ENCODE measurements at regions of chr20 and their contacts with region 1.

Region 1: DNA sequence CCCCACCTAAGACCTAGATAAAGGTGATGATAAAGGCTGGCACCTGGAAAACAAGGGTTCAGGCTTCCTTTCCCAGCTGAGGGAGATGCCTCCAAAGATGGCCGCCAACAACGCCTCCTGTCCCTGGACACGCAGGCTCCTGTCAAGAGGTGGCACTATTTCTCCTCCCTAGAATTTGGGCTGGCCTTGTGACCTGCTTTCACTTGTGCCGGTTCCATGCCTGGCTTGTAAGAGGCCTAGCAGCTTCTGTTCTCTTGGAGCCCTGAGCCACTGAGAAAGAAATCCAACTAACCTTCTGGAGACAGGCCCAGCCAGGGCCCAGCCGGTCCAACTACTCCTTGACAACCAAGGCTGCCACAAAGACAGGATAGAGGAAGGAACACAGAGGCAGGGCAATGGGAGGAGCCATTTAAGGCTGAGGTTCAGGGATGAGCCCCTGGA is 60.2 kb upstream of the RALY start:
- DNase-seq: peak; percentile 46
- H3K4me3 ChIP-seq: no peak overlapping the region
- H3K27ac ChIP-seq: peak overlapping the region; percentile 26
- H3K4me1 ChIP-seq: no peaks in the 10 kb centered on the region
- H3K27me3 ChIP-seq: peaks cover 5% of the 10 kb centered on the region
- CTCF ChIP-seq: peak; percentile 71

Region 2: GRCh38 chr20:34069341-34070078 is 136.0 kb after region 1 on chr20:
- intact Hi-C with region 1: loop called (anchors 5 kb)
- DNase-seq: peak; percentile 56
- H3K4me3 ChIP-seq: no peak overlapping the region
- H3K27ac ChIP-seq: peak overlapping the region; percentile 35
- H3K4me1 ChIP-seq: peaks cover 55% of the 10 kb centered on the region
- H3K27me3 ChIP-seq: no peaks in the 10 kb centered on the region
- CTCF ChIP-seq: peak; percentile 90

Measured in left ventricle myocardium inferior (tissue), 1 donor.